Heart right ventricle (tissue), 16 donors: ENCODE measurements at regions of chr5 and their contacts with region 1.

Region 1: DNA sequence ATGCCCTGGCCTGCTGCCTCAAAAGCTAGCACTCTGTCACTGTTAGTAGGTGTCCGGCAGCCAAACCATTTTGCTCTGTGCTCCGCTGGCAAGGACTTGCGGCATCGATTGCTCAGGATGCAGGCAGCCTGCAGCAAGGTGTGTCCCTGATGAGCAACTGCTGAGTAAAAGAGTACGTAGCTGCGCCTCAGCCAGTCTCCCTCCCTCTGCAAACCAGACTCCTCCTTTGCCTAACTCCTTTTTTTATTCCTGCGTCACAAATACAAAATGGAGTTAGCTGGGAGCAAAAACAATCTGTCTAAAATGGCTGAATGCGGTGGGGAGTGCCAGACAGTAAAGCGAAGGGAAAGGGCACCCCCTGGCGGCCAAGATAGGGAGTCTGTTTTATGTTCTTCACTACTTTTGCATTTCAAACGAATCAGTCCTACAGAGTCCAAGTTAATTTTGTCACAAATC is 61.1 kb downstream of the DIAPH1 start:
- DNase-seq: peak; percentile 83 to 91
- ATAC-seq: peak; percentile 81 to 90 (median 88)
- H3K4me3 ChIP-seq: peak overlapping the region in 8 of 10 donors; percentile 4 to 45 (median 33)
- H3K27ac ChIP-seq: peak overlapping the region; percentile 58 to 95 (median 87)
- H3K4me1 ChIP-seq: peaks cover 6 to 50% (median 40%) of the 10 kb centered on the region in 9 donors
- H3K27me3 ChIP-seq: no peaks in the 10 kb centered on the region
- CTCF ChIP-seq: peak; percentile 83 to 95 (median 90)

Region 2: DNA sequence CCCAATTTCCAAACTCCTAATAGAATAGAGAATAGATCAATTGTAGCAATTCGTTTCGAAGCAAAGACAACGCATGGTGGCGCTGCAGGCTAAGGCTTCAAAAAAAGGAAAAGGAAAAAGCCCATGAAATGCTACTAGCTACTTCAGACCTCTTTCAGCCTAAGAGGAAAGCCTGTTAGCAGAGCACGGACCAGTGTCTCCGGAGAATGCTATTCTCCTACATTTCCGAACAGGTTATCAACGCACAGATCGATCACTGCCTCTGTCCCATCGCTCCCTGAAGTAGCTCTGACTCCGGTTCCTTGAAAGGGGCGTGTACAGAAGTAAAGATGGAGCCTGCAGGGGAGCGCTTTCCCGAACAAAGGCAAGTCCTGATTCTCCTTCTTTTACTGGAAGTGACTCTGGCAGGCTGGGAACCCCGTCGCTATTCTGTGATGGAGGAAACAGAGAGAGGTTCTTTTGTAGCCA is 312.4 kb before region 1 on chr5 and contains the start of gene PCDHB15:
- intact Hi-C with region 1: loop called in 5 of 10 experiments (anchors 2 to 10 kb)
- DNase-seq: peak in 1 of 2 donors; percentile 37
- ATAC-seq: peak; percentile 20 to 62 (median 46)
- H3K4me3 ChIP-seq: peak within 1 kb of the TSS; percentile 12 to 59 (median 44)
- H3K27ac ChIP-seq: peak within 1 kb of the TSS in 2 of 10 donors; percentile 17 to 60
- H3K4me1 ChIP-seq: no peaks in the 10 kb centered on the region
- H3K27me3 ChIP-seq: peaks cover 0 to 29% (median 13%) of the 10 kb centered on the region in 7 donors
- CTCF ChIP-seq: peak; percentile 15 to 61 (median 47)
- total RNA-seq, gene PCDHB15: 3.3 to 10.5 (median 5.2) TPM

Region 3: GRCh38 chr5:141412854-141413539 is 144.7 kb before region 1 on chr5 and contains the start of gene PCDHGA10:
- intact Hi-C with region 1: loop called in 9 of 10 experiments (anchors 2 to 10 kb)
- DNase-seq: no peak
- ATAC-seq: peak in 6 of 8 donors; percentile 55 to 65 (median 60)
- H3K4me3 ChIP-seq: peak within 1 kb of the TSS in 9 of 10 donors; percentile 5 to 48 (median 34)
- H3K27ac ChIP-seq: peak within 1 kb of the TSS in 4 of 10 donors; percentile 1 to 24 (median 8)
- H3K4me1 ChIP-seq: peaks cover 0 to 19% (median 0%) of the 10 kb centered on the region in 9 donors
- H3K27me3 ChIP-seq: peaks cover 0 to 96% (median 0%) of the 10 kb centered on the region in 7 donors
- CTCF ChIP-seq: peak; percentile 18 to 59 (median 52)
- total RNA-seq, gene PCDHGA10: 4.3 to 7.8 (median 6.7) TPM

Region 4: DNA sequence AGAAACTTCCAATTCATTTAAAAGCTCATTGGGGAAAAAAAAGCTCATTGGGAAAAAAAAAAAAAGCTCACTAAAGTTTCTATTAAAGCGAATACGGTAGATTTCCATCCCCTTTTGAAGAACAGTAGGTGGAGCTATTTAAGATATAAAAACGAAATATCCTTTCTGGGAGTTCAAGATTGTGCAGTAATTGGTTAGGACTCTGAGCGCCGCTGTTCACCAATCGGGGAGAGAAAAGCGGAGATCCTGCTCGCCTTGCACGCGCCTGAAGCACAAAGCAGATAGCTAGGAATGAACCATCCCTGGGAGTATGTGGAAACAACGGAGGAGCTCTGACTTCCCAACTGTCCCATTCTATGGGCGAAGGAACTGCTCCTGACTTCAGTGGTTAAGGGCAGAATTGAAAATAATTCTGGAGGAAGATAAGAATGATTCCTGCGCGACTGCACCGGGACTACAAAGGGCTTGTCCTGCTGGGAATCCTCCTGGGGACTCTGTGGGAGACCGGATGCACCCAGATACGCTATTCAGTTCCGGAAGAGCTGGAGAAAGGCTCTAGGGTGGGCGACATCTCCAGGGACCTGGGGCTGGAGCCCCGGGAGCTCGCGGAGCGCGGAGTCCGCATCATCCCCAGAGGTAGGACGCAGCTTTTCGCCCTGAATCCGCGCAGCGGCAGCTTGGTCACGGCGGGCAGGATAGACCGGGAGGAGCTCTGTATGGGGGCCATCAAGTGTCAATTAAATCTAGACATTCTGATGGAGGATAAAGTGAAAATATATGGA is 127.2 kb before region 1 on chr5 and contains the start of gene PCDHGA12:
- intact Hi-C with region 1: loop called in 1 of 10 experiments (anchors 2 kb)
- DNase-seq: peak in 1 of 2 donors; percentile 69
- ATAC-seq: peak; percentile 69 to 92 (median 90)
- H3K4me3 ChIP-seq: peak within 1 kb of the TSS in 9 of 10 donors; percentile 24 to 52 (median 40)
- H3K27ac ChIP-seq: peak within 1 kb of the TSS in 7 of 10 donors; percentile 5 to 52 (median 31)
- H3K4me1 ChIP-seq: peaks cover 0 to 22% (median 0%) of the 10 kb centered on the region in 9 donors
- H3K27me3 ChIP-seq: peaks cover 0 to 78% (median 0%) of the 10 kb centered on the region in 7 donors
- CTCF ChIP-seq: peak; percentile 6 to 69 (median 60)
- total RNA-seq, gene PCDHGA12: 5.4 to 9.2 (median 6.1) TPM

Region 5: DNA sequence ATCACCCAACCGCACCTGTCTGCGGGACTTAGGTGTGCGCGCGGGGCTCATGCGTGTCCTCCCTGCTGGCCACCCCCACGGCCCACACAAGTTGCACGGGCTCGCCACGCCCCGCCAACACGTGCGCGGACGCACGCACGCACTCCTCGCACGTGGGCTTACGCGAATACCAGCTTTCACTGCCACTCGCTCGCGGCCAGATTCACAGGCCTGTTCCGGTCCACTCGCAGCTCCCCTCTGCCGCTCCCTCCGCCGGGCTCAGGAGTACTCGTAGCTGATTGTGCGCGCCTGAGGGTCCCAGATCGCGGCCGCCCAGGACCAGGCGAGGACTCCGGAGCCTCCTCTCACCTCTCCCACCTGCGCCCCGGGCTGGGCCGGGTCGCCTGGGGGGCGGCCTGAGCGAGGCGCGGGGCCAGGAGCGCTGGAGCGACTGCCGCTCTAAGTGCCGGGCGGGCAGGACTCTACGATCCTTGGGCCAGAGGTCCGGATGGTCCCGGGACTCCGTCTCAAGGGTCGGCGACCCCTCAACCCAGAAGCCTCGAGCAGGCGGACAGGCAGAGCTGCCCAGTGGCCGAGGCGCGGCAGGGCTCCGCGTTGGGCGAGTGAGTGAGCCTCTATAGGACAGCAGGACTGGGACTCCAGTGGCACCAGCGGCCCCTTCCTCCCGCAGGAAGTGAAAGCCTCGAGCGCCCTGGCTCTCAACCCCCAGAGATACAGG is 65.4 kb before region 1 on chr5:
- intact Hi-C with region 1: no loop called
- DNase-seq: no peak
- ATAC-seq: no peak
- H3K4me3 ChIP-seq: peak overlapping the region in 2 of 10 donors; percentile 4 to 22
- H3K27ac ChIP-seq: peak overlapping the region in 1 of 10 donors; percentile 19
- H3K4me1 ChIP-seq: peaks cover 9 to 60% (median 25%) of the 10 kb centered on the region in 9 donors
- H3K27me3 ChIP-seq: peaks cover 0 to 61% (median 0%) of the 10 kb centered on the region in 7 donors
- CTCF ChIP-seq: no peak

Region 6: DNA sequence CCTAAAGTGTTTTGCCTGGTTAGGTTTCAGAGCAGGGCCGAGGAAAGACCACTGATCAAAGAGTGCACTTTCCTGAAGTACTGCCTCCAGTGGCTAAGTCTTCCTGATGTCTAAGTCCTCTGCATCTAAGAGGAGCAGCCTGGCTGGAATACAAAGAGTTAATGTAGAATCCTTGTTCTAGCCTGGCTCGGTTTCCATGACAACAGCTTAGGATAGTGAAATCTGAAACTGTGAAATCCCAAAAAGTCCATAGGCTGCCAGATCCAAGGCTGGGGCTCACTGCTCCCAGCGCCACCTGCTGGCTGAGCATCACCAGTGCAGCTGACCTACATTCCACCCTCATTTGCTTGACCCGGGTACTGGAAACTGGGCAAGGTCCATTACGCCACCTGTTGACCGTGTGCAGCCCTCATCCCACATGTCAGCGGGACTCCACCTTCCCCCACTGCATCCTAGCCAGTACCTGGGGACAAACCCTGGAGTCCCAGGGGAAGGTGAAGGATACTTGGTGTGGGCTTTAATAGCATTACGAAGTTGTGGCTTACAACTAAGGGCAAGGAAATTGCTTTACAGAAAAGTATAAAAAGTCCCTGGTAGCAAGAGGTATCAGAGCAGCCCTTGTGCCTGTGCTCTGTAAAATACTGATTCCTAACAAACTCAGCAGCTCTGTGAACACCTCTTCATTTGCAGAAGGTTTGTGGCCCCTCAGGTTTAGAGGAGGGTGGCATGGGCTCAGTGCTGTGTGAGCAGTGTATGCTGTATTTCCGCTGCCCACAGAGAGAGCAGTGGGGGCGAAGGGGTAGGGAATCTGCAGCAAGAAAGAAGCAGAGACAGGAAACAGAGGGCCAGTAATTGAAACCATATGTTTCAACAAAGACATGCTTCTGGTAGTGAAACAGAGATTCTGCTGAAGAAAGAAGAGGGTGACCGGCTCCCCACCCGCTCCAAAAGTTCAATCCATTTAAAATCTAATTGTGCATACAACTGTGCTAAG is 32.8 kb before region 1 on chr5:
- intact Hi-C with region 1: loop called in 8 of 10 experiments (anchors 1 to 5 kb)
- DNase-seq: peak; percentile 84 to 91
- ATAC-seq: peak; percentile 64 to 76 (median 72)
- H3K4me3 ChIP-seq: no peak overlapping the region
- H3K27ac ChIP-seq: peak overlapping the region in 9 of 10 donors; percentile 52 to 94 (median 71)
- H3K4me1 ChIP-seq: peaks cover 16 to 87% (median 75%) of the 10 kb centered on the region in 9 donors
- H3K27me3 ChIP-seq: no peaks in the 10 kb centered on the region
- CTCF ChIP-seq: peak; percentile 98 to 100 (median 99)

Region 7: GRCh38 chr5:141692919-141693725 is 135.4 kb after region 1 on chr5:
- intact Hi-C with region 1: no loop called
- DNase-seq: no peak
- ATAC-seq: peak in 1 of 8 donors; percentile 5
- H3K4me3 ChIP-seq: no peak overlapping the region
- H3K27ac ChIP-seq: no peak overlapping the region
- H3K4me1 ChIP-seq: peaks cover 0 to 30% (median 20%) of the 10 kb centered on the region in 9 donors
- H3K27me3 ChIP-seq: peaks cover 0 to 6% (median 1%) of the 10 kb centered on the region in 7 donors
- CTCF ChIP-seq: no peak